ENCODE measurements at regions of chr16 and their contacts with region 1.

Region 1: DNA sequence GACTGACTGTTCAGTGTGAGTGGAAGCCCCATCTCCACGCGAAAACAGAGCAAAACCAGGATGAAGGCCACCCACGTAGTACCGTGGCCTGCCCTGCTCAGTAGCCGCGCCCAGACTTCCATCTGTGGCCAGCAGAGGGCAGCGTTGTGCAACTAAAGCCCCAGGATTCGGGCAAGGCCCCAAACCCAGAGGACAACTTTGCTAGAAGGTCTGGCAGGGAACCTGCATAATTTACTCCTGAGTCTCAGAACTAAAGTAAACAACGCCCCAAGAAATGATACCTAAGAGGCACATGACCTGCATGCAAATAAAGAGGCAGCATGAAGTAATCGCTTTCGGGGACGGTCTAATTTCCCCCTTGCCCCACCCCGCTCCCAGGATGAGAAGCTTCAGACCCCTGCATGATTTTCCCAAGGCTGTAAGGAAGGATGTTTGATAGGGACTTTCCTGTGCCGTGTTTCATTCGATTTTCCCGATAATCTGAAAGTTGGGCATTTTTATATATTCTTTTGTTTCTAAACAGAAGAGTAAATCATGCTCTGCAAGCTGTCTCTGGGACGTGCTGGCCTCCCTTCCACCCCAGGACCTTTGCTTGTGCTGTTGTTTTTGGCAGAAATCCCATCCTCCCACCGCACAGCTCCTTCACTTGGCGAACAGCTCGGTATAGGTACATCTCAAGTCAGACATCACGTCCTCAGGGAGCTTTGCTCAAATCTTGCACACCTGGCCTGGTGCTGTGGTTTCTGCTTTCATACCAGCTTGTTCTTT is 18.6 kb downstream of the HSBP1 start:
- DNase-seq: peak; percentile 95
- H3K4me3 Mint-ChIP-seq: no peak overlapping the region
- H3K27ac Mint-ChIP-seq: no peak overlapping the region
- H3K4me1 Mint-ChIP-seq: peaks cover 5% of the 10 kb centered on the region
- H3K27me3 Mint-ChIP-seq: peaks cover 2% of the 10 kb centered on the region

Region 2: GRCh38 chr16:83727018-83727417 is 99.3 kb before region 1 on chr16:
- intact Hi-C with region 1: no loop called
- DNase-seq: peak; percentile 57
- H3K4me3 Mint-ChIP-seq: no peak overlapping the region
- H3K27ac Mint-ChIP-seq: no peak overlapping the region
- H3K4me1 Mint-ChIP-seq: peaks cover 4% of the 10 kb centered on the region
- H3K27me3 Mint-ChIP-seq: no peaks in the 10 kb centered on the region

Region 3: DNA sequence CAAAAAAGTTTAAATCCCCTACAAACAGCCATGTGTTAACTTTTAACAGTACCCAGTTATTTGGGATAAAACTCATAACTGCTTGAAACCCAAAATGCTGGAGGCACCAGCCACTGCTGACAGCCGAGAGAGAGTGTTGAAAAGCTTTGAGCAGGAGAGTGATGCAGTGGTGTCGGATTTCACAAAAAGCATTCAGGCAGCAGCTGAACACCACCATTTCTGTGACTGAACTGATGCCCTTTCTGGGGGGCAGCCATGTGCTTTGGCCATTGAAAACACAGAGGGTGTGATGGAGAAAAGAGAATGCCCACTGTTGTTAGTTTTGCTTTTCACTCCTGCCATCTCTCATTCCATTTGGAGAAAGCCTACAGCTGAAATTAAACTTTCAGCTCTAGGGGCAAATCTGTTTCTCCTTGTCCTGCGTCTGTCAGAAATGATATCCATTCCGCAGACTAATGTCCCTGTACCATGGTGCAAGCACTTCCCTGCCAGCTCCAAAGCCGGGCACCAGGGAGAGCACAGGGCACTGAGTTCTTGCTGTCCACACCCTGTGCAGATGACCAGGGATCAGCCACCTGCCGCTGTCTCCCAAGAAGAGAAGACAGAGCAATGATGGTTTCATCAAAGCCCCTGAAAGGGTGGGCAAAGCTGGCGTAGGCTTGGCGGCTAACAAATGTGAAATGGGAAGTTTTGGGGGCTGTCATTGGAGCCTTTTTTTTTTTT is 56.0 kb after region 1 on chr16:
- intact Hi-C with region 1: loop called (anchors 5 kb)
- DNase-seq: no peak
- H3K4me3 Mint-ChIP-seq: no peak overlapping the region
- H3K27ac Mint-ChIP-seq: no peak overlapping the region
- H3K4me1 Mint-ChIP-seq: no peaks in the 10 kb centered on the region
- H3K27me3 Mint-ChIP-seq: peaks cover 4% of the 10 kb centered on the region

Region 4: DNA sequence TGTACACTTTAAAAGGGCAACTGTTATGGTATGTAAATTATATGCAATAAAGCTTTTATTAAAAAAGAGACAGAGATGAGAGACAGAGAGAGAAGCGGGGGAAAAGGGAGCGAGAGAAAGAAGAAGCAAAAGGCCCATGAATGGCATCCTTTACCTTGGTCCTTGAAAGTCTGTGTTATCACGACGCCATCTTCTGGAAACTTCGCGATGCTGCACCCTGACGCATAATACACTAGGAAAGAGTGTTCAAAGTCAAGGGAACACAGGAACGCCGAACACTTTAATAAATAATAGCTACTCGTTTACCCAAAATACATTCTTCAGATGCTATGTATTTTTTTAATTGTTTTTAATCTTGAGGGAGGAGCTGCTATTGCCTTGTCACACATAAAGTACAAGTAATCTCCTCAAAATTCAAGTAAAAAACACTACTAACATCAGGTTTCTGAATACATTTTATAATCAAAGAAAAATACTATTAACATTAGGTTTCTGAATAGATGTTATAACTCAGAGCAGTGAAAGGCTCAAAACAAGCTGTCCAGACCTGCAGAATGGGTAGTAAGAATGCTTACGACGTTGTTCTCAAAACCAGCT is 239.3 kb after region 1 on chr16:
- intact Hi-C with region 1: loop called (anchors 5 kb)
- DNase-seq: peak; percentile 81
- H3K4me3 Mint-ChIP-seq: no peak overlapping the region
- H3K27ac Mint-ChIP-seq: no peak overlapping the region
- H3K4me1 Mint-ChIP-seq: peaks cover 7% of the 10 kb centered on the region
- H3K27me3 Mint-ChIP-seq: no peaks in the 10 kb centered on the region

Measured in activated CD4-positive, alpha-beta T cell treated with anti-CD3 and anti-CD28 coated beads, Interleukin-2, amount 10 ng/mL, durations not matched to agents 24 days and 14 days (primary cell).